Brain microvascular endothelial cell (primary cell): ENCODE measurements at regions of chr6 and their contacts with region 1.

Region 1: DNA sequence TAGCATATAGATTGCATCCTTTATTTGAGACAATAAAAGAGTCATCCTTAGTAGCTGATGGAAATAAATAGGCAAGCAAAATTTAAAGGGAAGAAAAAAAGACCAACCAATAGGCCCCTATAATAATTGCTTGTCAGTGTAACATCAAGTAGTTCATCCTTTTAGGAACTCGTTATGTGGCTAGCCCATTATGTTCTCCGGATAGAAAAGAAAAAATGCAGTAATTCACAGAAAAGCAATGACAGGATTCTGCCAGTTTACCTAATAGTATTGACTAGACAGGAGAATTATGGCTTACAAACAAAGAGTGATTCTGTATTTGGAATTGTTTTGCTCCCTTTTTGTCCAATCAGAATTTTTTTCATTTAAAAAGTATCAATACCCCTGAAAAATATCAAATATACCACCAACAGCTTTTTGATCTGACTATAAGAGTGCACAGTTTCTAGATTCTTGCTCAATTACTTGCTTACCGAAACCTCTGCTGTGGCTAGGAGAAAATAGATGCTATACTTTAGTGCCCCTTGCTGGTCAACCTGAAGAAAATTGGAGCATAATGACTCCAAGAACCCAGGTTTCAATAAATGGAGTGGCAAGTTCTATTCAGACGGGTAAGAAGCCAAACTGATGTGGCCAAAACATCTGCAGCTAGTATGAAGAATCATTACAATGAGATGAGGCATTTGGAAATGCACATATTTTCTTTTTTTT is 91.5 kb upstream of the SASH1 start:
- DNase-seq: peak; percentile 41
- H3K4me3 ChIP-seq: no peak overlapping the region
- H3K27ac ChIP-seq: no peak overlapping the region
- H3K27me3 ChIP-seq: no peaks in the 10 kb centered on the region
- CTCF ChIP-seq: peak; percentile 53

Region 2: GRCh38 chr6:148530394-148530953 is 279.3 kb after region 1 on chr6:
- in situ Hi-C with region 1: loop called (anchors 25 kb)
- DNase-seq: peak; percentile 92
- H3K4me3 ChIP-seq: peak overlapping the region; percentile 33
- H3K27ac ChIP-seq: peak overlapping the region; percentile 94
- H3K27me3 ChIP-seq: no peaks in the 10 kb centered on the region
- CTCF ChIP-seq: no peak

Region 3: GRCh38 chr6:148727104-148727503 is 476.0 kb after region 1 on chr6:
- in situ Hi-C with region 1: no loop called
- DNase-seq: no peak
- H3K4me3 ChIP-seq: no peak overlapping the region
- H3K27ac ChIP-seq: no peak overlapping the region
- H3K27me3 ChIP-seq: no peaks in the 10 kb centered on the region
- CTCF ChIP-seq: no peak